PC-9 (cell line): ENCODE measurements at regions of chr10 and their contacts with region 1.

Region 1: DNA sequence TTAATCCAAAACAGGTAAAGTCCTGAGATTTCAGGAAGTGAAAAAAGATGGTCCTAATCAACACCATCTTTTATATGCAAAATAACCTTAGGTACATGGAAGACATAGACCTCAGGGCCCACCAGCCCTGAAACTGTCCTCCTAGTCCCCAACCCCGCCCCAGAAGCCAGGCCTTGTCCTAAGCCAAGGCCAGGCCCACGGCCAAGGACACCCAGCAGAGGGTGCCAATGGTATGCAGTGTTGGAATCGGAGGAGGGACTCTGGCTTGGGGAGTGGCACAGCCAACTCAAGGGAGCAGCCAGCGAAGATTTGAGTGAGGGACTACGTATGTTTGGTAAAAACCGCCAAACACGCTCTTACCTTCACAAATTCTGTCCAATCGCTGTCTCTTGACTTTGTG is 96.7 kb downstream of the ZRANB1 start:
- DNase-seq: peak in 1 of 2 experiments; percentile 28
- H3K4me3 ChIP-seq: no peak overlapping the region
- H3K27ac ChIP-seq: peak overlapping the region; percentile 85; the same call in 1 of the 2 replicates
- H3K4me1 ChIP-seq: peaks cover 28% of the 10 kb centered on the region
- H3K27me3 ChIP-seq: no peaks in the 10 kb centered on the region
- CTCF ChIP-seq: no peak

Region 2: GRCh38 chr10:125719146-125720001 is 680.7 kb after region 1 on chr10 and contains the start of gene EDRF1:
- CTCF ChIA-PET with region 1: no interaction called
- POLR2A ChIA-PET with region 1: no interaction called
- intact Hi-C with region 1: loop called (anchors 5 kb)
- DNase-seq: peak; percentile 92 to 97
- H3K4me3 ChIP-seq: peak within 1 kb of the TSS; percentile 98
- H3K27ac ChIP-seq: peak within 1 kb of the TSS; percentile 76
- H3K4me1 ChIP-seq: peaks cover 12% of the 10 kb centered on the region
- H3K27me3 ChIP-seq: no peaks in the 10 kb centered on the region
- CTCF ChIP-seq: no peak
- total RNA-seq, gene EDRF1: 12.8 and 21.7 TPM in 2 replicates